CD8-positive, alpha-beta T cell (primary cell): ENCODE measurements at regions of chr6 and their contacts with region 1.

Region 1: DNA sequence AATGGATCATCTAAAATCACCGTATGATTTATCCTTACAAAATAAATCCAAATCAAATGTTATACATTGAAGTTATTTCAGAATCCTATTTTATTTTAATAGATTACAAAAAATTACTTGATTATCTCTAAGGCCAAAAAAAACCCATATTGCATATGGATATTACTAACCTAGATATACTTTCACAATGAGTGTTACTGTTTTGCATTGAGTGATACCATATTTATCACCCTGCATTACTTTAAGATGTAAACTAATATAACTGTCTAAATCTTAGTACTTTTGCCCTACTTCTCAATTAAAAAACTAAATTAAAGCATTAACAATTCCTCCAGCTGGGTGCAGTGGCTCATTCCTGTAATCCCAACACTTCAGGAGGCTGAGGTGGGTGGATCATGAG is 11.1 kb downstream of the PPIL4 start:
- DNase-seq: no peak
- ATAC-seq: no peak
- H3K4me3 ChIP-seq: no peak overlapping the region
- H3K4me3 Mint-ChIP-seq: no peak overlapping the region
- H3K27ac ChIP-seq: no peak overlapping the region
- H3K27ac Mint-ChIP-seq: no peak overlapping the region
- H3K4me1 ChIP-seq: no peaks in the 10 kb centered on the region
- H3K4me1 Mint-ChIP-seq: peaks cover 9% of the 10 kb centered on the region
- H3K27me3 ChIP-seq: no peaks in the 10 kb centered on the region
- H3K27me3 Mint-ChIP-seq: no peaks in the 10 kb centered on the region
- CTCF ChIP-seq: no peak

Region 2: GRCh38 chr6:149499066-149499465 is 35.7 kb before region 1 on chr6:
- CTCF ChIA-PET with region 1: no interaction called
- POLR2A ChIA-PET with region 1: no interaction called
- intact Hi-C with region 1: loop called in 1 of 2 experiments (anchors 1 kb)
- DNase-seq: no peak
- ATAC-seq: no peak
- H3K4me3 ChIP-seq: no peak overlapping the region
- H3K4me3 Mint-ChIP-seq: no peak overlapping the region
- H3K27ac ChIP-seq: no peak overlapping the region
- H3K27ac Mint-ChIP-seq: peak overlapping the region; percentile 50
- H3K4me1 ChIP-seq: peaks cover 24% of the 10 kb centered on the region
- H3K4me1 Mint-ChIP-seq: peaks cover 38% of the 10 kb centered on the region
- H3K27me3 ChIP-seq: no peaks in the 10 kb centered on the region
- H3K27me3 Mint-ChIP-seq: no peaks in the 10 kb centered on the region
- CTCF ChIP-seq: no peak